ENCODE measurements at regions of chr2 and their contacts with region 1.

Region 1: GRCh38 chr2:164761740-164762460 is 79.7 kb downstream of the COBLL1 start:
- DNase-seq: peak; percentile 47
- ATAC-seq: peak; percentile 22
- H3K4me3 ChIP-seq: peak overlapping the region in 1 of 5 experiments; percentile 76
- H3K4me3 Mint-ChIP-seq: peak overlapping the region; percentile 94
- H3K27ac ChIP-seq: peak overlapping the region; percentile 79 to 95
- H3K27ac Mint-ChIP-seq: peak overlapping the region; percentile 96
- H3K4me1 ChIP-seq: peaks cover 38 to 48% of the 10 kb centered on the region in 2 donors
- H3K4me1 Mint-ChIP-seq: peaks cover 46% of the 10 kb centered on the region
- H3K27me3 ChIP-seq: no peaks in the 10 kb centered on the region
- H3K27me3 Mint-ChIP-seq: no peaks in the 10 kb centered on the region
- CTCF ChIP-seq: no peak

Region 2: GRCh38 chr2:164706522-164706921 is 55.4 kb before region 1 on chr2:
- CTCF ChIA-PET with region 1: no interaction called
- POLR2A ChIA-PET with region 1: no interaction called
- intact Hi-C with region 1: no loop called
- DNase-seq: no peak
- ATAC-seq: no peak
- H3K4me3 ChIP-seq: no peak overlapping the region
- H3K4me3 Mint-ChIP-seq: no peak overlapping the region
- H3K27ac ChIP-seq: no peak overlapping the region
- H3K27ac Mint-ChIP-seq: no peak overlapping the region
- H3K4me1 ChIP-seq: no peaks in the 10 kb centered on the region
- H3K4me1 Mint-ChIP-seq: no peaks in the 10 kb centered on the region
- H3K27me3 ChIP-seq: no peaks in the 10 kb centered on the region
- H3K27me3 Mint-ChIP-seq: no peaks in the 10 kb centered on the region
- CTCF ChIP-seq: no peak

Region 3: DNA sequence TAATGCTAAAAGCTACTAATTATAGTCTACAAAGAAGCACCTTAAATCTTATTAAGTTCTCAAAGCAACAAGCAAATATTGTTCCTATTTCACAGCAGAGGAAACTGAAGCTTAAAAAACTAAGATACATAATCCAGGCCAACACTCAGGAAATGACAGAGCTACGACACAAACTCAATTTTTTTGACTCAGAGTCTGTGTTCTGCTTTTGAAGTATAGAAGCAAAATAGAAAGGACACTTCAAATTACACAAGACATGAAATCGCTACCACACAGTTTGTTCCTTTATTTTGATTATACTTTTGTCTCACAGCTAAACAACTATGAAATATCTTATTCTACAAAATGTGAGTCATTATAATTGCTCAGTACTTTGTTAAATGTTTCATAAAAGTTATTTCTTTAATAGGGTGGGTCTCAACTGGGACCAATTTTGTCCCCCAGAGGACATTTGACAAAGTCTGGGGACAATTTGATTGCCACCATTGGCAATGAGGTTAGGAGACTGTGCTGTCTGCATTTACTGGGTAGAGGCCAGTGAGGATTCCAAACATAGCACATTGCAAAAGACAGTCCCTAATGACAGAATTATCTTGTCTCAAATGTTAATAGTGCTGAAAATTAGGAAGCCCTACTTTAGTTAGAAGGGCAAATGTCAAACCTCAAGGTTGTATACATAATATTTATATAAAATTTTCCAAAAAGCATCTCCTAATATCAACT is 39.1 kb before region 1 on chr2:
- CTCF ChIA-PET with region 1: no interaction called
- POLR2A ChIA-PET with region 1: no interaction called
- intact Hi-C with region 1: no loop called
- DNase-seq: no peak
- ATAC-seq: no peak
- H3K4me3 ChIP-seq: no peak overlapping the region
- H3K4me3 Mint-ChIP-seq: no peak overlapping the region
- H3K27ac ChIP-seq: peak overlapping the region in 1 of 2 donors; percentile 27
- H3K27ac Mint-ChIP-seq: no peak overlapping the region
- H3K4me1 ChIP-seq: peaks cover 5 to 7% of the 10 kb centered on the region in 2 donors
- H3K4me1 Mint-ChIP-seq: peaks cover 14% of the 10 kb centered on the region
- H3K27me3 ChIP-seq: no peaks in the 10 kb centered on the region
- H3K27me3 Mint-ChIP-seq: no peaks in the 10 kb centered on the region
- CTCF ChIP-seq: no peak

Region 4: DNA sequence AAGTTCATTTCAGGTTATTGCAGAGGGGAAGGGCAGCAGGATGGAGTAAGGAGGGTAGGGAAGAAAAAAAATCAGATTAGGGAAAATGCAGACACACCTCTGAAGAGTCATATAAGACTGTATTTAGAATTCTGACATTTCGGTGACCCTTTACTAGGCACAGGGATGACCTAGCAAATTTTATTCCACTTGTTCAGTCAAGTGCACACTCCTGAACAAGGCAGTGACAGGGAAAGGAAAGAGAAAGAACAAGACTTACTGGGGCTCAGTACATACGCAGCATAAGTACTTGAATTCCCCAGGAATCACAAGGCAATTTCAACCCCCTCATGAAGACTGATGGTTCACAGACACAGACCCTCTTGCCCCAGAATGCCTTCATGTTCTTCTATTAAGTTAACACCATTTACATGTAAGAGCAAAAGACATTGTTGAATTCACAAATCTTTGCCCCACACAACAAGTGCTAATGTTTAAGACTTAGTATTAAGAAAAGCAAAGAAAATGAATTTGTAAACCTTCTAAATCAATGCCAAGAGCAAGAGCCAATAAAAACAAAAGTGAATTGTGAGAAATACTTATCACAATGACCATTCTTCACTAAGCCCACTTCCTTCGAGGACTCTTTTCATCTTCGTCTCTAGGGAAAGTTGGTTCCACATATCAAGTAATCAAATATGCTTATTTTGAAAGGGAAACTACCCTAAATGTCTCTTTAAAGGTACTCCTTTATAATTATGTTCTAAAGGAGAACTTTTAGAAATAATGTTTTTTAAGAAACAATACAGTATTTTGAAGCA is 32.7 kb after region 1 on chr2:
- CTCF ChIA-PET with region 1: no interaction called
- POLR2A ChIA-PET with region 1: no interaction called
- intact Hi-C with region 1: loop called (anchors 5 kb)
- DNase-seq: no peak
- ATAC-seq: no peak
- H3K4me3 ChIP-seq: peak overlapping the region in 1 of 5 experiments; percentile 21
- H3K4me3 Mint-ChIP-seq: peak overlapping the region; percentile 9
- H3K27ac ChIP-seq: no peak overlapping the region
- H3K27ac Mint-ChIP-seq: no peak overlapping the region
- H3K4me1 ChIP-seq: peaks cover 11 to 29% of the 10 kb centered on the region in 2 donors
- H3K4me1 Mint-ChIP-seq: peaks cover 35% of the 10 kb centered on the region
- H3K27me3 ChIP-seq: no peaks in the 10 kb centered on the region
- H3K27me3 Mint-ChIP-seq: no peaks in the 10 kb centered on the region
- CTCF ChIP-seq: no peak

Region 5: GRCh38 chr2:164974221-164974620 is 212.3 kb after region 1 on chr2:
- CTCF ChIA-PET with region 1: interaction called, 3 read pairs
- POLR2A ChIA-PET with region 1: no interaction called
- intact Hi-C with region 1: loop called (anchors 5 kb)
- DNase-seq: no peak
- ATAC-seq: no peak
- H3K4me3 ChIP-seq: no peak overlapping the region
- H3K4me3 Mint-ChIP-seq: peak overlapping the region; percentile 33
- H3K27ac ChIP-seq: peak overlapping the region; percentile 21 to 79
- H3K27ac Mint-ChIP-seq: peak overlapping the region; percentile 46
- H3K4me1 ChIP-seq: peaks cover 73 to 84% of the 10 kb centered on the region in 2 donors
- H3K4me1 Mint-ChIP-seq: peaks cover 80% of the 10 kb centered on the region
- H3K27me3 ChIP-seq: no peaks in the 10 kb centered on the region
- H3K27me3 Mint-ChIP-seq: no peaks in the 10 kb centered on the region
- CTCF ChIP-seq: no peak

Measured in B cell (primary cell).